CD4-positive, alpha-beta T cell (primary cell): ENCODE measurements at regions of chr17 and their contacts with region 1.

Region 1: DNA sequence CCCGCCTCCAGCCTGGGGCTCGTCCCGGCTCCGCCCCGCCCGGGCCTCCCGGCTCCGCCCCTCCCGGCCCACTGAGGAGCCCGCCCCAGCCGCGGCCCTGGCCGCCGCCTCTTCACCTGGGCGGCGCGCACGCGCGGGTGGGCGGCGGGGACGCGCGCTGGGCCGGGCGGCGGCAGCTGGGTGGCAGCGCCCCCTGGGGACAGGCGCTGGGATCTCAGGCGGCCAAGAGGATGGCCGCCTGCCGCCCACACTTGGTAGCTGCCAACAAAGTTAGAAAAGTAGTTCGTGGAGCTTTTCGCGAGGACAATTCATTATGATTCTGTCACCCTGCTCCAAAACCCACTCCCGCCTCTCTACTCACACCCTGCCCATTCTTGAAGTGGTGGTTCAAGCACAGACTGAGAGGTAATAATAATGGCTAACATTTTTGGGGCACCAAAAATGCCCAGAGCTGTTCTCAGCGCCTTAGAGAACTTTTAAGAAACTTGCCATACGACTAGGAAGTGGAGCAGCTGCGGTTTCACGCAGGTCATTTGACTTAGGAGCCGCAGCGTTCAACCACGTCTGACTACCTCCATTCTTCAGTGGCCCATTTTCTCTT is 340 bp upstream of the MYO1D start:
- DNase-seq: peak; percentile 81 to 98 (median 92)
- ATAC-seq: peak; percentile 93
- H3K4me3 ChIP-seq: peak overlapping the region; percentile 36
- H3K4me3 Mint-ChIP-seq: peak overlapping the region; percentile 92
- H3K27ac ChIP-seq: peak overlapping the region; percentile 41 to 63
- H3K27ac Mint-ChIP-seq: peak overlapping the region; percentile 80
- H3K4me1 ChIP-seq: peaks cover 11% of the 10 kb centered on the region
- H3K4me1 Mint-ChIP-seq: peaks cover 14% of the 10 kb centered on the region
- H3K27me3 ChIP-seq: no peaks in the 10 kb centered on the region
- H3K27me3 Mint-ChIP-seq: peaks cover 5% of the 10 kb centered on the region
- CTCF ChIP-seq: peak; percentile 69

Region 2: GRCh38 chr17:31858642-31859473 is 1018.4 kb before region 1 on chr17 and contains the start of gene COPRS:
- CTCF ChIA-PET with region 1: no interaction called
- POLR2A ChIA-PET with region 1: no interaction called
- intact Hi-C with region 1: loop called in 1 of 2 experiments (anchors 5 kb)
- DNase-seq: peak; percentile 63 to 92 (median 78)
- ATAC-seq: peak; percentile 85
- H3K4me3 ChIP-seq: peak within 1 kb of the TSS; percentile 69
- H3K4me3 Mint-ChIP-seq: peak within 1 kb of the TSS; percentile 87
- H3K27ac ChIP-seq: no peak within 1 kb of the TSS
- H3K27ac Mint-ChIP-seq: no peak within 1 kb of the TSS
- H3K4me1 ChIP-seq: peaks cover 15% of the 10 kb centered on the region
- H3K4me1 Mint-ChIP-seq: peaks cover 16% of the 10 kb centered on the region
- H3K27me3 ChIP-seq: no peaks in the 10 kb centered on the region
- H3K27me3 Mint-ChIP-seq: no peaks in the 10 kb centered on the region
- CTCF ChIP-seq: no peak
- total RNA-seq, gene COPRS: 2.2 to 2.3 TPM

Region 3: DNA sequence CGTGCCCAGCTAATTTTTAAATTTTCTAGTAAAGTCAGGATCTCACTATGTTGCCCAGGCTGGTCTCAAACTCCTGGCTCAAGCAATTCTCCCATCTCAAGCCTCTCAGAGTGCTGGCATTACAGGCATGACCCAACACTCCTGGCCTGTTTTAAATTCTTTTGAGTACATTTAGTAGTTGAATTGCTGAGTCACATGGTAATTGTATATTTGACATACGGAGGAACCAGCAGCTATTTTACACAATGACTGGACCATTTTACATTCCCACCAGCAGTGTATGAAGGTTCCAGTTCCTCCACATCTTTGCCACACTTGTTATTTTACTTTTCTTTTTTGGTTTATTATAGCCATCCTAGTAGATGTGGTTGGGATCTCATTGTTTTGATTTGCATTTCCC is 691.4 kb before region 1 on chr17:
- CTCF ChIA-PET with region 1: no interaction called
- POLR2A ChIA-PET with region 1: no interaction called
- intact Hi-C with region 1: no loop called
- DNase-seq: no peak
- ATAC-seq: no peak
- H3K4me3 ChIP-seq: no peak overlapping the region
- H3K4me3 Mint-ChIP-seq: no peak overlapping the region
- H3K27ac ChIP-seq: no peak overlapping the region
- H3K27ac Mint-ChIP-seq: no peak overlapping the region
- H3K4me1 ChIP-seq: no peaks in the 10 kb centered on the region
- H3K4me1 Mint-ChIP-seq: no peaks in the 10 kb centered on the region
- H3K27me3 ChIP-seq: no peaks in the 10 kb centered on the region
- H3K27me3 Mint-ChIP-seq: no peaks in the 10 kb centered on the region
- CTCF ChIP-seq: no peak

Region 4: GRCh38 chr17:32349854-32350665 is 527.2 kb before region 1 on chr17 and contains the start of gene ZNF207:
- CTCF ChIA-PET with region 1: interaction called, 3 read pairs
- POLR2A ChIA-PET with region 1: no interaction called
- intact Hi-C with region 1: loop called in 1 of 2 experiments (anchors 10 kb)
- DNase-seq: peak; percentile 90 to 98 (median 93)
- ATAC-seq: peak; percentile 97
- H3K4me3 ChIP-seq: peak within 1 kb of the TSS; percentile 91
- H3K4me3 Mint-ChIP-seq: peak within 1 kb of the TSS; percentile 95
- H3K27ac ChIP-seq: peak within 1 kb of the TSS; percentile 98 to 99
- H3K27ac Mint-ChIP-seq: peak within 1 kb of the TSS; percentile 95
- H3K4me1 ChIP-seq: peaks cover 44% of the 10 kb centered on the region
- H3K4me1 Mint-ChIP-seq: peaks cover 41% of the 10 kb centered on the region
- H3K27me3 ChIP-seq: no peaks in the 10 kb centered on the region
- H3K27me3 Mint-ChIP-seq: no peaks in the 10 kb centered on the region
- CTCF ChIP-seq: no peak
- total RNA-seq, gene ZNF207: 252 to 262 TPM

Region 5: DNA sequence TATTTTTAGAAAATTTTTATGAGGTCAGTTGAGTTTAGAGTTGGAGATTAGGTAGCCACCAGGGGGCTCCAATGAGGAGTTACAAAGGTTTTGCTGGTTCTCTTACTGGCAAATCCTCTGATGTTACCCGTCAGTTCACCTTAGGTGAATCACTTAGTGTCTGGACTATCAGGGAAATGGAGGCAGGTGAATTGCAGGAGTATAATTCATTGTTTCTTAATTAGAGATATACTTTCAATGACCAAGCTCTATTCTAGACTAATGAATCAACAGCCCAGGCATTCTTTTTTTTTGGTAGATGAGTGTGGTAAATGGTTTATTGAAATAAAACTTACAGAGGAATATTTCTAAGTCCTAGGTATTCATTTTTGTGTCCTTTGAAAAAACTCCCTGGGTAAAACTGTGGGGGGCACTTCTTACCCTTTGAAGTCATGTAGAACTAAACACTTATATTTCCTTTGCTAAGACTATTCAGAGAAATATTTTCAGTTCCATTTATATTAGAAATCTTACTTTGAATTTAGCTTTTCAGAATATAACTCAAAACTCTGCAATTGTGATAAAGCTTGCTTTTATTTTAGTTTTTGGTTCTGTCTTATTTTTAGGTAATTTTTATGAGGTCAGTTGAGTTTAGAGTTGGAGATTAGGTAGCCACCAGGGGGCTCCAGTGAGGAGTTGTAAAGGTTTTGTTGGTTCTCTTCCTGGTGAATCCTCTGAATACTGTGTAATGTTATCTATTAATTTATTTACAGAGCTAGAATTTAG is 415.2 kb before region 1 on chr17:
- CTCF ChIA-PET with region 1: interaction called, 9 read pairs
- POLR2A ChIA-PET with region 1: no interaction called
- intact Hi-C with region 1: loop called in 1 of 2 experiments (anchors 1 kb)
- DNase-seq: peak; percentile 42 to 83 (median 60)
- ATAC-seq: peak; percentile 89
- H3K4me3 ChIP-seq: no peak overlapping the region
- H3K4me3 Mint-ChIP-seq: no peak overlapping the region
- H3K27ac ChIP-seq: no peak overlapping the region
- H3K27ac Mint-ChIP-seq: peak overlapping the region; percentile 34
- H3K4me1 ChIP-seq: no peaks in the 10 kb centered on the region
- H3K4me1 Mint-ChIP-seq: peaks cover 36% of the 10 kb centered on the region
- H3K27me3 ChIP-seq: no peaks in the 10 kb centered on the region
- H3K27me3 Mint-ChIP-seq: no peaks in the 10 kb centered on the region
- CTCF ChIP-seq: peak; percentile 69

Region 6: GRCh38 chr17:32519228-32520103 is 357.8 kb before region 1 on chr17:
- CTCF ChIA-PET with region 1: interaction called, 3 read pairs
- POLR2A ChIA-PET with region 1: no interaction called
- intact Hi-C with region 1: loop called in 1 of 2 experiments (anchors 5 kb)
- DNase-seq: peak in 13 of 14 experiments; percentile 60 to 87 (median 76)
- ATAC-seq: peak; percentile 49
- H3K4me3 ChIP-seq: peak overlapping the region; percentile 43
- H3K4me3 Mint-ChIP-seq: peak overlapping the region; percentile 83
- H3K27ac ChIP-seq: peak overlapping the region; percentile 84
- H3K27ac Mint-ChIP-seq: peak overlapping the region; percentile 87
- H3K4me1 ChIP-seq: peaks cover 65% of the 10 kb centered on the region
- H3K4me1 Mint-ChIP-seq: peaks cover 85% of the 10 kb centered on the region
- H3K27me3 ChIP-seq: no peaks in the 10 kb centered on the region
- H3K27me3 Mint-ChIP-seq: no peaks in the 10 kb centered on the region
- CTCF ChIP-seq: no peak

Region 7: GRCh38 chr17:32794533-32795246 is 82.6 kb before region 1 on chr17:
- CTCF ChIA-PET with region 1: interaction called, 10 read pairs
- POLR2A ChIA-PET with region 1: no interaction called
- intact Hi-C with region 1: no loop called
- DNase-seq: no peak
- ATAC-seq: no peak
- H3K4me3 ChIP-seq: no peak overlapping the region
- H3K4me3 Mint-ChIP-seq: no peak overlapping the region
- H3K27ac ChIP-seq: no peak overlapping the region
- H3K27ac Mint-ChIP-seq: no peak overlapping the region
- H3K4me1 ChIP-seq: no peaks in the 10 kb centered on the region
- H3K4me1 Mint-ChIP-seq: no peaks in the 10 kb centered on the region
- H3K27me3 ChIP-seq: no peaks in the 10 kb centered on the region
- H3K27me3 Mint-ChIP-seq: peaks cover 5% of the 10 kb centered on the region
- CTCF ChIP-seq: no peak

Region 8: DNA sequence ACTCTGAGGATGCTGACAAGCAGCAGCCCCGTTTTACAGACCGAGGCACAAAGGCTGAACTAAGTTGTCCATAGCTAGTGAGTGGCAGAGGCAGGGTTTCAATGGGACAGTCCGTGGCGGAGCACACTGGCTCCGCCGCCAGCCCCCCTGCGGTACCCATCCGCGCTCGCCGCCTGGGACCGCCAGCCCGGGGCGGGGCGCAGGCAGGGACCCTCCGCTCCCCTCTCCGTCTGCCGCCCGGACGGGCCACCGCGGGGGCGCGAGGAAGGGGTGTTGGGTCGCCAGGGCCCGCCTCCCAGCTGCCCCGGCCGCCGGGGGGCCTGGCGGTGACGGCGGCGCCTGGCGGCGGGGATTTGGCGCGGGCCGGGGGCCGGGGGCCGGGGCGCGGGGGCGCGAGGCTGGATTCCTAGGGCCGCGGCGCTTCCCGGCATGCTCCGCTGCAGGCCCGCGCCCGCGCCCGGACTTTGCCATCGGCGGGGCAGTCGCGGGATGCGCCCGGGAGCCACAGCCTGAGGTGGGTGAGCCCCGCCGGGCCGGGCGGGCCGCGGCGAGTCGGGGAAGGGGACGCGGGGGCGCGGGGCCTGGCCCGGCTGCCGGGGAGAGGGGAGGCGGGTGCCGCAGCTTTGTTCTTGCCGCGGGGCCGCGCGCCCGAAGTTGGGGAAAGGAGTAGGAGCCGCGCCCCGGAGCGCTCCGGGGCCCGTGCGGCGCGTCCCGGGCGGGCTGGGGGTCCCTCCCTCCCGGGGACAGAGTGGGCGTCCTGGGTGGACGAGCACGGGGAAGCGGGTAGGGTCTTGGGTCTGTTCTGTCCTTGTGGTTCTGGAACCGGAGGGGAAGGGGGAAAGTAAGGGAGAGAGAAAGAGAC is 50.7 kb after region 1 on chr17 and contains the start of gene TMEM98:
- CTCF ChIA-PET with region 1: no interaction called
- POLR2A ChIA-PET with region 1: no interaction called
- intact Hi-C with region 1: no loop called
- DNase-seq: no peak
- ATAC-seq: no peak
- H3K4me3 ChIP-seq: no peak within 1 kb of the TSS
- H3K4me3 Mint-ChIP-seq: peak within 1 kb of the TSS; percentile 61
- H3K27ac ChIP-seq: no peak within 1 kb of the TSS
- H3K27ac Mint-ChIP-seq: no peak within 1 kb of the TSS
- H3K4me1 ChIP-seq: peaks cover 6% of the 10 kb centered on the region
- H3K4me1 Mint-ChIP-seq: no peaks in the 10 kb centered on the region
- H3K27me3 ChIP-seq: peaks cover 39 to 42% of the 10 kb centered on the region in 2 experiments
- H3K27me3 Mint-ChIP-seq: peaks cover 44% of the 10 kb centered on the region
- CTCF ChIP-seq: no peak
- total RNA-seq, gene TMEM98: not detected